Activated CD8-positive, alpha-beta T cell treated with anti-CD3 and anti-CD28 coated beads for 36 hours (primary cell): ENCODE measurements at regions of chr7 and their contacts with region 1.

Region 1: GRCh38 chr7:65216459-65216858 is 157.2 kb upstream of the ZNF92 start:
- DNase-seq: peak; percentile 73
- ATAC-seq: peak; percentile 69
- H3K4me3 Mint-ChIP-seq: no peak overlapping the region
- H3K27ac Mint-ChIP-seq: no peak overlapping the region
- H3K4me1 Mint-ChIP-seq: no peaks in the 10 kb centered on the region
- H3K27me3 Mint-ChIP-seq: no peaks in the 10 kb centered on the region
- CTCF ChIP-seq: peak; percentile 80

Region 2: GRCh38 chr7:64890761-64891362 is 325.6 kb before region 1 on chr7:
- CTCF ChIA-PET with region 1: no interaction called
- POLR2A ChIA-PET with region 1: no interaction called
- intact Hi-C with region 1: no loop called
- DNase-seq: no peak
- ATAC-seq: no peak
- H3K4me3 Mint-ChIP-seq: no peak overlapping the region
- H3K27ac Mint-ChIP-seq: no peak overlapping the region
- H3K4me1 Mint-ChIP-seq: peaks cover 16% of the 10 kb centered on the region
- H3K27me3 Mint-ChIP-seq: peaks cover 32% of the 10 kb centered on the region
- CTCF ChIP-seq: no peak

Region 3: GRCh38 chr7:65230231-65230630 is 13.8 kb after region 1 on chr7:
- CTCF ChIA-PET with region 1: no interaction called
- POLR2A ChIA-PET with region 1: no interaction called
- intact Hi-C with region 1: no loop called
- DNase-seq: no peak
- ATAC-seq: no peak
- H3K4me3 Mint-ChIP-seq: no peak overlapping the region
- H3K27ac Mint-ChIP-seq: no peak overlapping the region
- H3K4me1 Mint-ChIP-seq: peaks cover 15% of the 10 kb centered on the region
- H3K27me3 Mint-ChIP-seq: no peaks in the 10 kb centered on the region
- CTCF ChIP-seq: no peak

Region 4: DNA sequence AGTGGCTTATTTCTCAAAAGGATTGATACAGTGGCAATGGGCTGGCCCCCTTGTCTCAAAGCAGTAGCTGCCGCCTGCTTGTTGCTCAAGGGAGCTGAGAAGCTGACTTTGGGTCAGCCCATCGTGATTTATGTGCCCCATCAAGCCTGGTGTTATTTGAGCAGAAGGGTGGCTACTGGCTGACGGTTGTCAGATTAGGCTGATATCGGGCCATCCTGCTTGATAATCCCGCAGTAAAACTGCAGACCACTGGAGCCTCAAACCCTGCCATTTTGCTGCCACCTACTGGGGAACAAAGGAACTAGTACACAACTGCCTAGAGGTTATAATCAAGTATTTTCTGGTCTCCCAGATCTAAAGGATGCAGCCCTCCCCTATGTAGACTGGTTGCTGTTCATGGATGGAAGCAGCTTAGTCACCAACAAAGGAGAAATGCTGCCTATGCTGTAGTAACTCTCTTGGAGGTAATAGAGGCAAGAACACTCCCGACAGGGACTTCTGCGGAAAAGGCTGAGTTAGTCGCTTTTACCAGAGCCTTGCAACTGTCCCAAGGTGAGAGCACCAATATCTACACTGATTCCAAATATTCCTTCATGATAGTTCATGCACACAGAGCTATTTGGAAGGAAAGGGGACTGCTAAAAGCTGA is 91.3 kb after region 1 on chr7:
- CTCF ChIA-PET with region 1: interaction called, 35 read pairs
- POLR2A ChIA-PET with region 1: no interaction called
- intact Hi-C with region 1: loop called (anchors 10 kb)
- DNase-seq: peak; percentile 60
- ATAC-seq: no peak
- H3K4me3 Mint-ChIP-seq: no peak overlapping the region
- H3K27ac Mint-ChIP-seq: no peak overlapping the region
- H3K4me1 Mint-ChIP-seq: no peaks in the 10 kb centered on the region
- H3K27me3 Mint-ChIP-seq: peaks cover 10% of the 10 kb centered on the region
- CTCF ChIP-seq: peak; percentile 72